ENCODE measurements at regions of chr19 and their contacts with region 1.

Region 1: DNA sequence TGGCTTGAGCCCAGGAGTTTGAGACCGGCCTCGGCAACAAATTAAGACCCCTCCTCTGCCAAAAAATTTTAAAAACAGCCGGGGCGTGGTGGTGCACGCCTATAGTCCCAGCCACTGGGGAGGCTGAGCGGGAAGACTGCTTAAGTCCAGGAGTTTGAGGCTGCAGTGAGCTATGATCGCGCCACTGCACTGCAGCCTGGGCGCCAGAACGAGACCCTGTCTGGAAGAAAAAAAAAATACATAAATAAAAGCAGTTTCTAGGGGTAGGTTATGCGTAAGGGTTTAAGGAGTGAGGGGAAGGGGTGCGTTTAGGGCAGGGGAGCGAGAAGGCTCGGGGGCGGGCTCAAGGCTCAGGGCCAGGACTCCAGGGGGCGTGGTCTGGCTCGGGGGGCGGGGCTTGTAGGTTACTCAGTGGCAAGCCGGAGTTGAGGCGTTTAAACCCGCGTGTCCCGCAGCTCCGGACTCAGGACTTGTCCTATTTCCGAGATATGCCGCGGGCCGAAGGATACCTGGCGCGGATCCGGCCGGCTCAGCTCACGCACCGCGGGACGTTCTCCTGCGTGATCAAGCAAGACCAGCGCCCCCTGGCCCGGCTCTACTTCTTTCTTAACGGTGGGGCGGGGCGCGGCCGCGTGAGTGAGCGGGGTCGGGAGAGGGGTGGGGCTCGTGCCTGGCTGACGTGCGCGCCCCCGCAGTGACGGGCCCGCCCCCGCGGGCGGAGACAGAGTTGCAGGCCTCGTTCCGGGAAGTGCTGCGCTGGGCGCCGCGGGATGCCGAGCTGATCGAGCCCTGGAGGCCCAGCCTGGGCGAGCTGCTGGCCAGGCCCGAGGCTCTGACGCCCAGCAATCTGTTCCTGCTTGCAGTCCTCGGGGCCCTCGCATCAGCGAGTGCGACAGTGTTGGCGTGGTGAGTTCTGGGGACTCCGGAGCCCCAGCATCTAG is 10.7 kb downstream of the SPACA6 start:
- DNase-seq: peak; percentile 95
- H3K4me3 Mint-ChIP-seq: peak overlapping the region; percentile 87
- H3K27ac Mint-ChIP-seq: peak overlapping the region; percentile 89
- H3K4me1 Mint-ChIP-seq: peaks cover 30% of the 10 kb centered on the region
- H3K27me3 Mint-ChIP-seq: peaks cover 3% of the 10 kb centered on the region

Region 2: GRCh38 chr19:51501594-51502263 is 202.1 kb before region 1 on chr19 and contains the start of gene SIGLEC12:
- intact Hi-C with region 1: no loop called
- DNase-seq: no peak
- H3K4me3 Mint-ChIP-seq: peak within 1 kb of the TSS; percentile 54
- H3K27ac Mint-ChIP-seq: peak within 1 kb of the TSS; percentile 64
- H3K4me1 Mint-ChIP-seq: peaks cover 28% of the 10 kb centered on the region
- H3K27me3 Mint-ChIP-seq: peaks cover 13% of the 10 kb centered on the region
- total RNA-seq, gene SIGLEC12: 0.52 and 0.54 TPM in 2 replicates

Region 3: GRCh38 chr19:51690454-51691073 is 13.3 kb before region 1 on chr19:
- intact Hi-C with region 1: loop called (anchors 1 kb)
- DNase-seq: peak; percentile 67
- H3K4me3 Mint-ChIP-seq: peak overlapping the region; percentile 92
- H3K27ac Mint-ChIP-seq: peak overlapping the region; percentile 84
- H3K4me1 Mint-ChIP-seq: peaks cover 11% of the 10 kb centered on the region
- H3K27me3 Mint-ChIP-seq: peaks cover 15% of the 10 kb centered on the region

Measured in activated T-helper 1 cell treated with anti-CD3 and anti-CD28 coated beads, Interleukin-12 subunit alpha, Interleukin-12 subunit beta, Interleukin-2, Interleukin-4 antibody, amounts not matched to agents 30 ng/mL and 10 ng/mL and 1 ng/mL, durations not matched to agents 14 hours and 24 hours and 36 hours (primary cell).